CD4-positive, alpha-beta T cell (primary cell): ENCODE measurements at regions of chr20 and their contacts with region 1.

Region 1: GRCh38 chr20:41738604-41739206 is 120.5 kb upstream of the CHD6 start:
- DNase-seq: peak in 9 of 14 experiments; percentile 2 to 45 (median 13)
- ATAC-seq: peak; percentile 57
- H3K4me3 ChIP-seq: no peak overlapping the region
- H3K4me3 Mint-ChIP-seq: no peak overlapping the region
- H3K27ac ChIP-seq: no peak overlapping the region
- H3K27ac Mint-ChIP-seq: no peak overlapping the region
- H3K4me1 ChIP-seq: no peaks in the 10 kb centered on the region
- H3K4me1 Mint-ChIP-seq: no peaks in the 10 kb centered on the region
- H3K27me3 ChIP-seq: no peaks in the 10 kb centered on the region
- H3K27me3 Mint-ChIP-seq: peaks cover 4% of the 10 kb centered on the region
- CTCF ChIP-seq: peak; percentile 47

Region 2: DNA sequence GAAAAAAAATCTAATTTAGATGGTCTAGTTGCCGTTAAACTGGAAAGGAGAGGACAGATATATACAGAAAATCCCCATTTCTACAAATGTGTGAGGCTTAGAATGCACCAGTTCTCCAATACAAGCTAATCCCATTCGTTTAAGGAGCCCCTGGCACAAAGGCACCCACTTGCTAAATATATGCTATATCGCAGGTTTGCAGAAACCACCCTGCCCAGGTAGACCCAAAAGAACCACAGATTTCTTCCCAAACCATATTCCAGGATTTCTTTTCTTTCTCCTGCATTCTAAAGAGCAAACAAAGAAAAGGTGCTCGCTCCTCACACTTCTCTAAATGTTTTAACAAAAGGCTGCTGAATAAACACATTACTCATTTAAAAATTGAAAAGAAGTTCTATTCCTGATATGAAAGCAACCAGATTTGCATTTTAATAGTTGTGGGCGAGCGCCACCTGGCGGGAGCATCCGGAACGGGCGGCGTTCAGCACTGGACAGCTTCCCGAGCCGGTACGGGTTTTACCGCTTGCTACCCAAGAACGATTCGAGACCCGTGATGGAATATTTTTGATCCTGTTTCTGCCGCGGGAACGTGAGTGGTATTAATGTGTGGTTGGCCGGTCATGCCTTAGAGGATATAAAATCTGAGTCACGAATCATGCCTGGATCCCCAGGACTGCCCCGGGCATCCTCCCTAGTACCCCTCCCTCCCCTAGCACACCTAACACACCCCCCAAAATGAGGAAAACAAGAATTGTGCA is 1449.0 kb after region 1 on chr20:
- CTCF ChIA-PET with region 1: no interaction called
- POLR2A ChIA-PET with region 1: no interaction called
- intact Hi-C with region 1: loop called in 1 of 2 experiments (anchors 5 kb)
- DNase-seq: peak; percentile 4 to 60 (median 32)
- ATAC-seq: no peak
- H3K4me3 ChIP-seq: no peak overlapping the region
- H3K4me3 Mint-ChIP-seq: no peak overlapping the region
- H3K27ac ChIP-seq: no peak overlapping the region
- H3K27ac Mint-ChIP-seq: no peak overlapping the region
- H3K4me1 ChIP-seq: peaks cover 8% of the 10 kb centered on the region
- H3K4me1 Mint-ChIP-seq: peaks cover 11% of the 10 kb centered on the region
- H3K27me3 ChIP-seq: peaks cover 24 to 31% of the 10 kb centered on the region in 2 experiments
- H3K27me3 Mint-ChIP-seq: peaks cover 64% of the 10 kb centered on the region
- CTCF ChIP-seq: peak; percentile 77

Region 3: GRCh38 chr20:43408848-43409576 is 1670.3 kb after region 1 on chr20:
- CTCF ChIA-PET with region 1: no interaction called
- POLR2A ChIA-PET with region 1: no interaction called
- intact Hi-C with region 1: loop called in 1 of 2 experiments (anchors 10 kb)
- DNase-seq: no peak
- ATAC-seq: no peak
- H3K4me3 ChIP-seq: no peak overlapping the region
- H3K4me3 Mint-ChIP-seq: no peak overlapping the region
- H3K27ac ChIP-seq: no peak overlapping the region
- H3K27ac Mint-ChIP-seq: no peak overlapping the region
- H3K4me1 ChIP-seq: no peaks in the 10 kb centered on the region
- H3K4me1 Mint-ChIP-seq: no peaks in the 10 kb centered on the region
- H3K27me3 ChIP-seq: peaks cover 12 to 26% of the 10 kb centered on the region in 2 experiments
- H3K27me3 Mint-ChIP-seq: peaks cover 71% of the 10 kb centered on the region
- CTCF ChIP-seq: no peak